ENCODE measurements at regions of chr11 and their contacts with region 1.

Region 1: GRCh38 chr11:14454861-14455632 is 44.6 kb downstream of the COPB1 start:
- DNase-seq: peak; percentile 68
- H3K4me3 ChIP-seq: no peak overlapping the region
- H3K27ac ChIP-seq: no peak overlapping the region
- H3K4me1 ChIP-seq: peaks cover 2% of the 10 kb centered on the region
- H3K27me3 ChIP-seq: no peaks in the 10 kb centered on the region
- CTCF ChIP-seq: peak; percentile 43 to 51
- POLR2A ChIP-seq: peak; percentile 23

Region 2: GRCh38 chr11:14237444-14237961 is 217.5 kb before region 1 on chr11:
- CTCF ChIA-PET with region 1: no interaction called
- POLR2A ChIA-PET with region 1: no interaction called
- dilution Hi-C with region 1: no loop called
- intact Hi-C with region 1: no loop called
- DNase-seq: no peak
- H3K4me3 ChIP-seq: no peak overlapping the region
- H3K27ac ChIP-seq: no peak overlapping the region
- H3K4me1 ChIP-seq: no peaks in the 10 kb centered on the region
- H3K27me3 ChIP-seq: peaks cover 2 to 9% of the 10 kb centered on the region in 2 experiments
- CTCF ChIP-seq: no peak
- POLR2A ChIP-seq: no peak

Region 3: GRCh38 chr11:14275076-14275475 is 180.0 kb before region 1 on chr11:
- CTCF ChIA-PET with region 1: interaction called, 10 read pairs
- POLR2A ChIA-PET with region 1: no interaction called
- dilution Hi-C with region 1: loop called (anchors 25 kb)
- intact Hi-C with region 1: no loop called
- DNase-seq: no peak
- H3K4me3 ChIP-seq: no peak overlapping the region
- H3K27ac ChIP-seq: no peak overlapping the region
- H3K4me1 ChIP-seq: no peaks in the 10 kb centered on the region
- H3K27me3 ChIP-seq: no peaks in the 10 kb centered on the region
- CTCF ChIP-seq: no peak
- POLR2A ChIP-seq: no peak

Region 4: GRCh38 chr11:14300661-14301304 is 154.3 kb before region 1 on chr11:
- CTCF ChIA-PET with region 1: interaction called, 514 read pairs
- POLR2A ChIA-PET with region 1: interaction called, 8 read pairs
- dilution Hi-C with region 1: loop called (anchors 25 kb)
- intact Hi-C with region 1: loop called (anchors 1 kb)
- DNase-seq: peak; percentile 88
- H3K4me3 ChIP-seq: no peak overlapping the region
- H3K27ac ChIP-seq: no peak overlapping the region
- H3K4me1 ChIP-seq: peaks cover 10% of the 10 kb centered on the region
- H3K27me3 ChIP-seq: no peaks in the 10 kb centered on the region
- CTCF ChIP-seq: peak; percentile 78 to 86
- POLR2A ChIP-seq: peak; percentile 27

Region 5: DNA sequence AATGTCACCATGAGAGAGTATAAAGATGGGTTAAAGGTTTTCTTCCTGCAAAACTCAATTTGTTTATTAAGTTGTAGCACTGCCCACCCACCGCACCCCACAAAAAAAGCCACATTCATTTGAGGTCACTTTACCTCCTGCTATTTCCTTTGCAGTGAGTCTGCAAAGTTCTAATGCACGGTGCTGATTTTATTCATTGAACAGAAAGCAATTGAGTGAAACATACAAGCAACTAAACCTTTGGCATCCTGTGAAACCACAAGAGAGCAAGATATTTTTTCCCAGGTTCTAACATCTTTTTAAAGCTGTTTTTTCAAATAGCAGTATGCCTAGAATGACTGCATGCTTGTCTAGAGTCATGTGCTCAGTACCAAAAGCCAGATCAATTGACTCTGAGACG is 135.0 kb before region 1 on chr11:
- CTCF ChIA-PET with region 1: interaction called, 20 read pairs
- POLR2A ChIA-PET with region 1: interaction called, 5 read pairs
- dilution Hi-C with region 1: no loop called
- intact Hi-C with region 1: no loop called
- DNase-seq: no peak
- H3K4me3 ChIP-seq: no peak overlapping the region
- H3K27ac ChIP-seq: no peak overlapping the region
- H3K4me1 ChIP-seq: peaks cover 69% of the 10 kb centered on the region
- H3K27me3 ChIP-seq: no peaks in the 10 kb centered on the region
- CTCF ChIP-seq: no peak
- POLR2A ChIP-seq: no peak

Region 6: GRCh38 chr11:14380947-14381561 is 74.0 kb before region 1 on chr11:
- CTCF ChIA-PET with region 1: interaction called, 31 read pairs
- POLR2A ChIA-PET with region 1: no interaction called
- dilution Hi-C with region 1: no loop called
- intact Hi-C with region 1: loop called (anchors 2 kb)
- DNase-seq: peak; percentile 73
- H3K4me3 ChIP-seq: peak overlapping the region; percentile 24 to 55 (median 40)
- H3K27ac ChIP-seq: peak overlapping the region; percentile 15
- H3K4me1 ChIP-seq: peaks cover 12% of the 10 kb centered on the region
- H3K27me3 ChIP-seq: no peaks in the 10 kb centered on the region
- CTCF ChIP-seq: no peak
- POLR2A ChIP-seq: peak; percentile 60

Region 7: DNA sequence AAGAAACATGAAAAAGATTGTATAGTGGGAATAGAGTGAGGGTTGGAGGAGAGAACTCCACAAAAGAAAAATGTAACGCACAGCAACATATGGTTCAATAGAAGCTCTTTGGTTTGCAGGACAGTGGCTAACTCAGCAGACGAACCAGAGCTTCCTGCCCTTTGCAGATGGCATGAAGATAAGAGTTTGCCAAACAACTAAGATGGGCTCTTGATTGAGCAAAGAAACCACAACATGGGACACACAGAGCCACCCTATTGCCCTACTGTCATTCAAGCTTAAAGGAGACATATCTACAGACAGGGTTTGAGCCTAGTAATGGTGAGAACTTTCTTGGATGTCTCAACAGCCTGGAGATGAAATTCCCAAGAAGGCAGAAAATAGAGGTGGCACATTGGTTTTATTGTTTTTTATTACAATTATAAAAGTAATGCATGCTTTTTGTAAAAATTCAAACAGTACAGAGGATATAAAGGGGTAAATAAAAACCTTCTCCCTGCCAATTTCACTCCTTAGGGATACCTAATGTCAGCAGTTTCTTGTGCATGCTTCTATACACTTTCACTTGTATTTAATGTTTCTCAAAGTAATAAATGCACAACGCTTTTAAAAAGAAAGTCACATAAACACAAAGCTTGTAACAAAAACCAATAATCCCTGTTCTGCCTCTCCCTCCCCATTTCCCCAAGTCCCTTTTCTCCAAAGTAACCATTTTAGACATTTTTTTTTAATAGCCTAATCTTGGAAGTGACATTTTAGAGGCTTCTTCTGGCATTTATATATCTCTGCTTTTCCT is 19.1 kb before region 1 on chr11:
- CTCF ChIA-PET with region 1: interaction called, 11 read pairs
- POLR2A ChIA-PET with region 1: no interaction called
- dilution Hi-C with region 1: no loop called
- intact Hi-C with region 1: no loop called
- DNase-seq: no peak
- H3K4me3 ChIP-seq: no peak overlapping the region
- H3K27ac ChIP-seq: no peak overlapping the region
- H3K4me1 ChIP-seq: no peaks in the 10 kb centered on the region
- H3K27me3 ChIP-seq: no peaks in the 10 kb centered on the region
- CTCF ChIP-seq: no peak
- POLR2A ChIP-seq: no peak

Region 8: GRCh38 chr11:14480716-14481115 is 25.7 kb after region 1 on chr11:
- CTCF ChIA-PET with region 1: interaction called, 15 read pairs
- POLR2A ChIA-PET with region 1: no interaction called
- dilution Hi-C with region 1: no loop called
- intact Hi-C with region 1: no loop called
- DNase-seq: no peak
- H3K4me3 ChIP-seq: no peak overlapping the region
- H3K27ac ChIP-seq: no peak overlapping the region
- H3K4me1 ChIP-seq: no peaks in the 10 kb centered on the region
- H3K27me3 ChIP-seq: no peaks in the 10 kb centered on the region
- CTCF ChIP-seq: no peak
- POLR2A ChIP-seq: no peak

Region 9: GRCh38 chr11:14506532-14506931 is 51.5 kb after region 1 on chr11:
- CTCF ChIA-PET with region 1: no interaction called
- POLR2A ChIA-PET with region 1: no interaction called
- dilution Hi-C with region 1: no loop called
- intact Hi-C with region 1: no loop called
- DNase-seq: no peak
- H3K4me3 ChIP-seq: no peak overlapping the region
- H3K27ac ChIP-seq: no peak overlapping the region
- H3K4me1 ChIP-seq: no peaks in the 10 kb centered on the region
- H3K27me3 ChIP-seq: no peaks in the 10 kb centered on the region
- CTCF ChIP-seq: no peak
- POLR2A ChIP-seq: no peak

Measured in endothelial cell of umbilical vein (primary cell).